HCT116 (cell line): ENCODE measurements at regions of chr2 and their contacts with region 1.

Region 1: GRCh38 chr2:155250800-155251199 is 552.3 kb downstream of the KCNJ3 start:
- DNase-seq: peak; percentile 44
- ATAC-seq: peak; percentile 99
- H3K4me3 ChIP-seq: no peak overlapping the region
- H3K27ac ChIP-seq: no peak overlapping the region
- H3K4me1 ChIP-seq: no peaks in the 10 kb centered on the region
- H3K27me3 ChIP-seq: no peaks in the 10 kb centered on the region
- CTCF ChIP-seq: peak; percentile 21 to 71 (median 66); a peak in 4 of 6 replicates
- POLR2A ChIP-seq: no peak
- RAD21 ChIP-seq: peak; percentile 54

Region 2: GRCh38 chr2:154402218-154402617 is 848.6 kb before region 1 on chr2:
- CTCF ChIA-PET with region 1: interaction called, 3 read pairs
- POLR2A ChIA-PET with region 1: no interaction called
- RAD21 ChIA-PET with region 1: no interaction called
- intact Hi-C with region 1: loop called (anchors 2 kb)
- DNase-seq: peak; percentile 43
- ATAC-seq: peak; percentile 67; the same call in 1 of the 2 replicates
- H3K4me3 ChIP-seq: no peak overlapping the region
- H3K27ac ChIP-seq: no peak overlapping the region
- H3K4me1 ChIP-seq: no peaks in the 10 kb centered on the region
- H3K27me3 ChIP-seq: no peaks in the 10 kb centered on the region
- CTCF ChIP-seq: peak; percentile 25 to 65 (median 55); a peak in 5 of 6 replicates
- POLR2A ChIP-seq: no peak
- RAD21 ChIP-seq: peak; percentile 53

Region 3: GRCh38 chr2:154452906-154453493 is 797.8 kb before region 1 on chr2:
- CTCF ChIA-PET with region 1: no interaction called
- POLR2A ChIA-PET with region 1: no interaction called
- RAD21 ChIA-PET with region 1: no interaction called
- intact Hi-C with region 1: loop called (anchors 2 kb)
- DNase-seq: peak; percentile 27
- ATAC-seq: peak; percentile 77; the same call in 1 of the 2 replicates
- H3K4me3 ChIP-seq: no peak overlapping the region
- H3K27ac ChIP-seq: no peak overlapping the region
- H3K4me1 ChIP-seq: no peaks in the 10 kb centered on the region
- H3K27me3 ChIP-seq: no peaks in the 10 kb centered on the region
- CTCF ChIP-seq: peak; percentile 30 to 69 (median 38); a peak in 4 of 6 replicates
- POLR2A ChIP-seq: no peak
- RAD21 ChIP-seq: peak; percentile 57

Region 4: DNA sequence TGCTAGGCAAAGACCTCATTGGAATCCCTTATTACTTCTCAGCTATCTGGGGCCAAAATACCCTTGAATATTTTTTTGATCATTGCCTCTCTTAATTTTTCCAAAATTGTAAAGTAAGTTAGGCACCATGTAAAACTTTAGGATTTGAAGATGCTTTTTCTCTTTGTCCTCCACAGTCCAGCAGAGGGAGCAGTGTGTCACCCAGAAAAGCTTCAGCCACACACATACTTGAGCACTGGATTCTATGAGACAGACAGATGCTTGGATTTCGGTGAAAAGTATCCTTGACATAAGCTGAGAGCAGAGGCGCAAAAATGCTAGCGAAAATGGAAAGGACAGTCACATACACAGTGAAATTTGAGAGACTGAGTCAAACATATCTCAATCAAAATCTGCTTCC is 627.0 kb before region 1 on chr2:
- CTCF ChIA-PET with region 1: no interaction called
- POLR2A ChIA-PET with region 1: no interaction called
- RAD21 ChIA-PET with region 1: no interaction called
- intact Hi-C with region 1: loop called (anchors 10 kb)
- DNase-seq: peak; percentile 56
- ATAC-seq: peak; percentile 80
- H3K4me3 ChIP-seq: no peak overlapping the region
- H3K27ac ChIP-seq: no peak overlapping the region
- H3K4me1 ChIP-seq: peaks cover 0 to 8% of the 10 kb centered on the region in 2 experiments; a peak in 1 of 4 replicates
- H3K27me3 ChIP-seq: no peaks in the 10 kb centered on the region
- CTCF ChIP-seq: peak; percentile 58 to 85 (median 80); a peak in 5 of 6 replicates
- POLR2A ChIP-seq: no peak
- RAD21 ChIP-seq: peak; percentile 74

Region 5: DNA sequence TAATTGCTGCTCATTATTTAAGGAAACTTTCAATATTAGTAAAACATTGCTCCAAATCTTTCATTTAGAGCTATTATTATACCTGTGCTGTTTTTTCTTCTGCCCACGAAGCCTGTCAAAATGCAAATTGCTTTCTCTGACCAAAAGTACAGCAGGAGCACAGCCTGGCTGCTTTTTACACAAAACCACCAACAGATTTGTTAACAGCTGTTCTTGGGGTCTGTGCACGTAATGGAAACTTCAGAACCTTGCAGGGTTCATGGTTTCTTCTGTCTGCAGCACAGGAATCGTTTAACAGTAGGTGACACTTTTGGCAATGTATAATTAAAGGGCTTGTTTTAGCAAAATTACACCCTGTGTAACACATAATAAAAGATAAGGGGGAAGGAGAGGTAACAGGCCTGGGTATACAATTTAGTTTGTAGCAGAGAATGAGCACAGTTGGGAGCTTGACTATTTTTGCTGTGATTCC is 105.0 kb before region 1 on chr2:
- CTCF ChIA-PET with region 1: no interaction called
- POLR2A ChIA-PET with region 1: no interaction called
- RAD21 ChIA-PET with region 1: no interaction called
- intact Hi-C with region 1: no loop called
- DNase-seq: no peak
- ATAC-seq: no peak
- H3K4me3 ChIP-seq: no peak overlapping the region
- H3K27ac ChIP-seq: no peak overlapping the region
- H3K4me1 ChIP-seq: no peaks in the 10 kb centered on the region
- H3K27me3 ChIP-seq: no peaks in the 10 kb centered on the region
- CTCF ChIP-seq: no peak
- POLR2A ChIP-seq: no peak
- RAD21 ChIP-seq: no peak